GM10248 (cell line): ENCODE measurements at regions of chr1 and their contacts with region 1.

Region 1: GRCh38 chr1:30718636-30719405 is 4.6 kb downstream of the MATN1 start:
- DNase-seq: peak; percentile 68
- CTCF ChIP-seq: peak; percentile 95

Region 2: DNA sequence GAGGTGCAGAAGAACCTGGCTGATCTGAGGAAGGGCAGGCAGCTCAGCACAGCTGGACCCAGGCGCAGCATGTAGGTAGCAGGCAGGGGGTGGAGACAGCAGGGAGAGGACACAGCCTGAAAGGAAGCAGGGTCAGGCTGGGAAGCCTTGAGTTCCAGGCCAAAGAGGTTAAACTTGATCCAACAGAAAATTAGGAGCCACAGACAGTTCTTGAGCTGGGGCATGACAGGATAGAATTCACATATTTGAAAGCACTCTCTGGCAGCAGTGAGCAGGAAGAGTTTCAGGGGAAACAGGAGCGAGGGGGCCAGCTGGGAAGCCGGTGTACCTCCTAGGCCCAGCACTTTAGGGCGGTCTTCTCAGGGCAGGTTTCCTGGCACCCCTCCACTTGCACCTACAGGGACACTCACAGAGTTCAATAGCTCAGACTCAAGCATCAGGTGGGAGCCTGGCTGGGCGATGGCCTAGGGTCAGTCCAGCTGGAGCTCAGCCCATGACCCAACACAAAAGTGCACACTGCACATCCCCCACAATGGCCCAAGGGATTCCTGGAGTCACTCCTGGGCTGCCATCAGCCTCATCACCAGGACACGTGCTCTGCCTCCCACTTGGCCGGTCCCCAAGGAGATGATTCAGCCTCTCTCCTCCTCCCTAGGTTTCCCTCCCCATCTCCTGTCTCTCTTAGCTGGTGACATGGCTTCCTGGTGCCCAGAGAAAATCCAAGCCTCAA is 18.1 kb before region 1 on chr1:
- CTCF ChIA-PET with region 1: no interaction called
- POLR2A ChIA-PET with region 1: no interaction called
- DNase-seq: no peak
- CTCF ChIP-seq: no peak

Region 3: GRCh38 chr1:30738040-30738714 is 19.4 kb after region 1 on chr1:
- CTCF ChIA-PET with region 1: interaction called, 31 read pairs
- POLR2A ChIA-PET with region 1: no interaction called
- DNase-seq: no peak
- CTCF ChIP-seq: no peak

Region 4: DNA sequence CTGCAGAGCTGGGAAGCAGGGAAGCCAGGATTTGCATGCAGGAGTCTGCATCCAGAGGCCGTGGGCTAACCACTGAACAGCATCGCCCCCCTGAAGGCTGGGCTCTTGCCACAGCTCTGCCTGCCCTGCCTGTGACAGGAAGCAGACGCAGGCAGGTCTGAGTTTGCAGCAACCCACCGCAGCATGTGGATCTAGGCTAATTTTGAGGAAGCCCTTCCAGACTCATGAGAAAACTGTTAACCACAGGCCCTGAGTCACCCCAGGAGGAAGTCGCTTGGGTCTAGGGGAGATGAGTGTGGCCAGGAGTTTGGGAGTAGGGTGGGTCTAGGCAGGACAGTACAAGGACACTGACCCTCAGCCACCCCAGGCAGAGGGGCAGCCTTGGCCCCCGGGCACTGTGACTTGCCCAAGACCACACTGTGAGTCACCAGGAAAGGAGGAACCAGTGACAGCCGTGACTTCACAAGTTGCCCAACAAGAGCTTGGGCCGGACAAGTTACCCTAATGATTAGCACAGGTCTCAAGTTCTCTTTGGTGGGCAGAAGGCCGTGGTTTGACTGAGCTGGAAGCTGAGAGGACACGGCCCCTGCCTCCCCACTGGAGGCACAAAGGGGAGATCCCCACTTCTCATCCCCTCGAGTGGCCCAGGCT is 37.8 kb after region 1 on chr1:
- CTCF ChIA-PET with region 1: interaction called, 34 read pairs
- POLR2A ChIA-PET with region 1: interaction called, 4 read pairs
- DNase-seq: no peak
- CTCF ChIP-seq: no peak

Region 5: DNA sequence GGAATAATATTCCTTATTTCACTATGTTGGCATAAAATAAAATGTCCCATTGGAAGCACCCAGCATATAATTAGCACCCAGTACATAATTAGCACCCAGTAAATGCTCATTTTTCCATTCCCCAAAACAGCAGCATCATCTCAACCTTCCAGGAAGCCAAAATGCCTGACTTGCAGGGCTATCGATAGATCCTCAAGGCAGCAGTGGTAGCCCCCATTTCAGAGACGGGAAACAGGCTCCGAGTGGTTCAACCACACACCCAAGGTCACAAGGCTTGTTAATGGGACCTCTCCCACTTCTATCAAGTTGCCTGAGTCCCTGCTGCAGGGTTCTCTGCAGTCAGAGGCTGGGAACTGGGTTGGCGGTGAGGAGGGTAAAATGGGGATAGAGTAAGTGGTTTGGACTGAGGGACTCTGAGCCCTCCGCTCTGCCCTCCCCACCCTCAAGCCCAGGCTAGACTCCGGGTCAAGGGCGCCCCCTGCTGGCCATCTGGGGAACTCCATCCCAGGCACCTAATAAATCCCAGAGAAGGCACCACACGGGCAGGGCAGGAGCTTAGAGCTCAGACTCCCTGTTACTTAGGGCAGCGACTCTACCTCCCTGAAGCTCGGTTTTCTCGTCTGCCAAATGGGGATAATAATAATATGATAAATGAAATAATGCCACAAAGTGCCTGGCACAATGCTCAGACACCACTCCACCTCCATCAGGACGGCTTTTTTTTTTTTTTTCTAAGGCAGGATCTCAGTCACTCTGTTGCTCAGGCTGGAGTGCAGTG is 60.7 kb after region 1 on chr1:
- CTCF ChIA-PET with region 1: interaction called, 611 read pairs
- POLR2A ChIA-PET with region 1: interaction called, 3 read pairs
- DNase-seq: peak; percentile 87
- CTCF ChIP-seq: peak; percentile 95

Region 6: GRCh38 chr1:30801771-30802198 is 83.0 kb after region 1 on chr1:
- CTCF ChIA-PET with region 1: interaction called, 36 read pairs
- POLR2A ChIA-PET with region 1: no interaction called
- DNase-seq: peak; percentile 76
- CTCF ChIP-seq: peak; percentile 97

Region 7: DNA sequence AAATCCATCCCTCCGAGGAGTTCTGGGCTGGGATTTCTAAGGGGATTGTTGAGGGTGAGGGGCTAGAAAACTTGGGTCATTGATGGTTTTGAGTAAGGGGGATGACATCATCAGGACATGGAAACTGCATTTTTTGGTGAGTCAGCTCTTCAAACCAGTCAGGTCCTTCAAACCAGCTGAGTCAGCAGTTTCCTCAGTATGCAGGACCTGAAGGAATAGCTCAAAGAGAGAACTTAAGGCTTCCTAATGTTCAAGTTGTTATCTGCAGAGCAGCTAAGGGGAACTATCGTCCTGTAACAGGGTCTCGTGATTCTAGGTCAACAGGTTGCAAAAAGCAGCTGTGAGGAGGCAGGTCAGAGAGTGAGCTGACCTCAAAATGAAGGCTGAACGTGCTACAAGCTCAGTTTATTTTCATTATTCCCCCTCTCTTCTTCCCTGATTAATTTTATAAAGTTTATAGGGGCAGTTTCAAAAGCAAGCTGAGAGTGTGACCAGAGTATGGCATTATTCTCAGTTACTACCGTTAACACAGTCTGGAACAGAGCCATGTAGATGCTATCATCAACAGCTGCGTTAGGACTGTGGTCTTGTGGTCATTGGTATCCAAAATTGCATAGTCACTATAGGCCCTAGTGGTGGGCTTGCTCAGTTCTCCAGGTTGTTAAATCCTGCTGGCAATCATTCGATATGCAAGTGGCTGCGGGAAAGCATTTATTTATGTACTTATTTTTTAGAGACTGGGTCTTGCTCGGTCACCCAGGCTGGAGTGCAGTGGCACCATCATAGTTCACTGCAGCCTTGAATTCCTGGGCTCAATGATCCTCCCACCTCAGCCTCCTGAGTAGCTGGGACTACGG is 200.4 kb after region 1 on chr1:
- CTCF ChIA-PET with region 1: interaction called, 61 read pairs
- POLR2A ChIA-PET with region 1: no interaction called
- DNase-seq: no peak
- CTCF ChIP-seq: no peak